ENCODE measurements at regions of chr6 and their contacts with region 1.

Region 1: DNA sequence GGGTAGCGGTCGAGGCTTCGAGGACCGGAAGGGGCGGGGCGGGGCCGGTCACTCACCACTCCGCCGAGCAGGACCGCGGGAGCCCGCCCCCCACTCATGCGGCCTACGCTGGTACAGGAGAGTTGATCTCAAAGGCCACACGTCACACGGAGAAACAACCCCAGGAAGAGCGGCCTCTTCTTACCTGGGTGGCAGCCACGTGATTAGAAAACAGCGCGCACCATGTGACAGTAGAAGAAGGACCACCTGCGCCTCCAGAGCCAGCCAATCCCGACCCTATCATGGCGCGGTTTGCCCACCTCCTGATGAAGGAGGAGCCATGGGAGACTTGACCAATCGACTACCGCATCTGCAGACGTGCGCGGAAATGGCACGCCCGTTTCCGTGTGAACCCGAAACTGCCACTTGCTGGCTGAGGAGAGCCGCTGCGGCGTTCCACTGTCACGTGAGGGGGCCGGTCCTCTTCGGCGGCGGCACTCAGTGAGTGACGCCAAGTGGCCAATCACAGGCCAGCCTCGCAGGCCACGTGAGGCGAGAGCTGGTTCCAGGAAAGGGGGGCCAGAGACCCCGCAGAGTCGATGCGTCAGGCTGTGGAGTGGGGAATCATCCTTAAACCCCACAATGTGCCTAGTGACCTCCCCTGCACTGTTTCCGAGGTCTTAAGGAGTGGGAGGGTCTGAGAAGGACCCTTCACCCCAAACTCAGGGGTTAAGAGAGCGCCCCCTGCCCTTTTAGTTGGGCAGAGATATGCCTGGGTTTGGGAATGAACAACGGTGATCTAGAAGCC is at the start of gene CUTA:
- DNase-seq: peak; percentile 100
- H3K4me3 Mint-ChIP-seq: peak within 1 kb of the TSS; percentile 92
- H3K27ac Mint-ChIP-seq: peak within 1 kb of the TSS; percentile 99
- H3K4me1 Mint-ChIP-seq: peaks cover 65% of the 10 kb centered on the region
- H3K27me3 Mint-ChIP-seq: no peaks in the 10 kb centered on the region
- total RNA-seq, gene CUTA: 163 to 181 TPM

Region 2: DNA sequence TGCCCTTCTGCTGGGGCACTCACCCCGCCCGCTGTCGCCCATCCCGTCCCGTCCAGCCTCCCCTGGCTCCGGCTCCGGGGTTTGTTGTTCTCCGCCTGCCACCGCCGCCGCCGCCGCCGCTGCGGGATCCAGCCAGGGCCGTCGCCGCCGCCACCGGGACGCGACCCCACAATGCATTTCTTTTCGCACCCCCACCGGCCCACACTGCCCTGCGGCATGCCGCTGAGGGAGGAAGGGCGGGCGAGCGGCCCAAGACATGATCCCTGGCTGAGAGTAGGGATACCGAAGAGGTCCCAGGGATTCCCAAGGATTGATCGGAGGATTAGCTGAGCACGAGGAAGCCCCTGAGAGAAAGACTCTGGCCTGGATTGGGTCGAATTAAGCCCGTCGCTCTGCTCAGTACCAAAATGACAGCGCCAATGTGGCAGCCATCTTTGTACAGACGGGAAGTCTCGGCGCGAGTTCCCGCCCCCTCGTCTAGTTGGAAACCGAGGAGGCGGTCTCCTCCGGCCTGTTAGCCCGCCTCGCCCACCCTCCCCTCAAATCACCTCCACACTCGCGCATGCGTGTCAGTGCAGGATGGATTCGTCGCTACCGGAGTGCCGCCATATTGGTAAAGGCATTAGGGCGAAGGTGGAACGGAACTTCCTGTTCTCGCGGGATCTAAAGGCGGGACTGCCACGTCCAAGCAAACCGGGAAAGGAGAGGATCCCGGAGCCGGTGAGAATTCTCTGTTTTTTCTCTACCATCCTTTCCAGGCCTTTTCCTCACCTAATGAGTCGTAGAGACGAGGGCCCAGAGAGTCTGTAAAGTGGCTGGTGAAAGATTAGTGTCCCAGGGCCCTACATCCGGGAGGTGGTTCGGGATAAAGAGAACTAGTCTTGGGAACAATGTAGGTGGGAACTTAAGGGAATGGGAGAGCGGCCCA is 217.6 kb before region 1 on chr6 and contains the starts of genes RXRB and SLC39A7:
- CTCF ChIA-PET with region 1: no interaction called
- intact Hi-C with region 1: loop called (anchors 1 kb)
- DNase-seq: peak; percentile 100
- H3K4me3 Mint-ChIP-seq: peak within 1 kb of the TSS; percentile 98
- H3K27ac Mint-ChIP-seq: peak within 1 kb of the TSS; percentile 97
- H3K4me1 Mint-ChIP-seq: peaks cover 60% of the 10 kb centered on the region
- H3K27me3 Mint-ChIP-seq: no peaks in the 10 kb centered on the region
- total RNA-seq, gene RXRB: 50.4 to 50.6 TPM
- total RNA-seq, gene SLC39A7: 35.9 to 39.5 TPM

Region 3: GRCh38 chr6:33213989-33214335 is 204.1 kb before region 1 on chr6:
- CTCF ChIA-PET with region 1: no interaction called
- intact Hi-C with region 1: no loop called
- DNase-seq: no peak
- H3K4me3 Mint-ChIP-seq: peak overlapping the region; percentile 57
- H3K27ac Mint-ChIP-seq: no peak overlapping the region
- H3K4me1 Mint-ChIP-seq: peaks cover 26% of the 10 kb centered on the region
- H3K27me3 Mint-ChIP-seq: peaks cover 31% of the 10 kb centered on the region

Region 4: GRCh38 chr6:33299237-33299944 is 118.7 kb before region 1 on chr6:
- CTCF ChIA-PET with region 1: no interaction called
- intact Hi-C with region 1: no loop called
- DNase-seq: peak; percentile 96
- H3K4me3 Mint-ChIP-seq: peak overlapping the region; percentile 85
- H3K27ac Mint-ChIP-seq: peak overlapping the region; percentile 98
- H3K4me1 Mint-ChIP-seq: peaks cover 29% of the 10 kb centered on the region
- H3K27me3 Mint-ChIP-seq: no peaks in the 10 kb centered on the region

Region 5: GRCh38 chr6:33317669-33318425 is 100.2 kb before region 1 on chr6 and contains the start of gene ZBTB22:
- CTCF ChIA-PET with region 1: interaction called, 4 read pairs
- intact Hi-C with region 1: loop called (anchors 1 kb)
- DNase-seq: peak; percentile 97
- H3K4me3 Mint-ChIP-seq: peak within 1 kb of the TSS; percentile 94
- H3K27ac Mint-ChIP-seq: peak within 1 kb of the TSS; percentile 95
- H3K4me1 Mint-ChIP-seq: peaks cover 72% of the 10 kb centered on the region
- H3K27me3 Mint-ChIP-seq: no peaks in the 10 kb centered on the region
- total RNA-seq, gene ZBTB22: 8.8 to 9.0 TPM

Region 6: DNA sequence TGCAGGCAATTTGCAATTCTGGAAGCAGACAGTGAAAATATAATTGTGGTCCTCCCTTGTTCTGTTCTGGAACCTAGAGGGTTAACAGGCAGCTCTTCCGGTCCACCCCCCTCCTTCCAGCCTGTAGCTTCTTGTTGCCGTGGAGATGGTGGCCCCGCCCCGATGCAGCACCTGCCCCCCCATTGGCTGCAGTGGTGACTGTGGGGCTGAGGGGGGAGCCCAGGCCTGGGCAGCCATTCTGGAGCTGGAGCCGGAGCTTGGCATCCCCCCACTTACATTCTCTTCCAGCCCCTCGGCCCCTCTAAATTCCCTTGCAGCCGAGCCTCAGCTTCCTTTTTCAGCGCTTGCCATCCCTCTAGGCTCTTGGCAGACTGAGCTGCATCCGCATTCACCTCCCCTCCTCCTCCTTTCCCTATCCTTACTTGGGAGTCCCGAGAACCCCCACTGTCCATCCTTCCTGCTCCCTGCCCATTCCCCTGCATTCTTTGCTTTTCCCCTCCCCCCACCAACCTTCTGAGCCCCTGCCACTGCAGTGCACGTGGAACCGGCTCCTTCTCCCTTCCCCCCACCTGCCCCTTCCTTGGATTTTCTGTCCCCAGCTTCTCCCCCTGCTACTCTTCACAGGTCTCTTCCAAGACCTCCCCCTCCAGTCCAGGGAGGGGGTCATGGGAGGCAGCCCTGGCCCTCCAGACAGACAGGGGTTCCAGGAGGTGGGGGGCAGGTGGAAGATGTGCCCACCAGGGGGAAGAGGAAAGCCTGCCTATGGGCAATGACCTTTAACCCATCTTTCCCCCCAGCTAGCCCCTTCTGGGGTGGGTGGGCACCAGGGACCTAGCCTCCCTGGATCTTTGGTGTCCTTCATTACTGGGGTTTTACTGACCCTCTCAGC is 13.1 kb after region 1 on chr6:
- CTCF ChIA-PET with region 1: interaction called, 6 read pairs
- intact Hi-C with region 1: loop called (anchors 1 kb)
- DNase-seq: peak; percentile 86
- H3K4me3 Mint-ChIP-seq: peak overlapping the region; percentile 67
- H3K27ac Mint-ChIP-seq: peak overlapping the region; percentile 64
- H3K4me1 Mint-ChIP-seq: peaks cover 60% of the 10 kb centered on the region
- H3K27me3 Mint-ChIP-seq: no peaks in the 10 kb centered on the region

Region 7: DNA sequence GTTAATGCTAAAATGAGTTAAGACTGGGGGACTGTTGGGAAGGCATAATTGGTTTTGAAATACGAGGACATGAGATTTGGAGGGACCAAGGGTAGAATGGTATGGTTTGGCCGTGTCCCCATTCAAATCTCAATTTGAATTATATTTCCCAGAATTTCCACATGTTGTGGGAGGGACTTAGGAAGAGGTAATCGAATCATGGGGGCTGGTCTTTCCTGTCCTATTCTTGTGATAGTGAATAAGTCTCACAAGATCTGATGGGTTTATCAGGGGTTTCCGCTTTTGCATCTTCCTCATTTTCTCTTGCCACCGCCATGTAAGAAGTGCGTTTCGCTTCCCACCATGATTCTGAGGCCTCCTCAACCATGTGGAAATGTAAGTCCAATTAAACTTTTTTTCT is 49.0 kb after region 1 on chr6:
- CTCF ChIA-PET with region 1: no interaction called
- intact Hi-C with region 1: no loop called
- DNase-seq: no peak
- H3K4me3 Mint-ChIP-seq: no peak overlapping the region
- H3K27ac Mint-ChIP-seq: no peak overlapping the region
- H3K4me1 Mint-ChIP-seq: no peaks in the 10 kb centered on the region
- H3K27me3 Mint-ChIP-seq: no peaks in the 10 kb centered on the region

Region 8: DNA sequence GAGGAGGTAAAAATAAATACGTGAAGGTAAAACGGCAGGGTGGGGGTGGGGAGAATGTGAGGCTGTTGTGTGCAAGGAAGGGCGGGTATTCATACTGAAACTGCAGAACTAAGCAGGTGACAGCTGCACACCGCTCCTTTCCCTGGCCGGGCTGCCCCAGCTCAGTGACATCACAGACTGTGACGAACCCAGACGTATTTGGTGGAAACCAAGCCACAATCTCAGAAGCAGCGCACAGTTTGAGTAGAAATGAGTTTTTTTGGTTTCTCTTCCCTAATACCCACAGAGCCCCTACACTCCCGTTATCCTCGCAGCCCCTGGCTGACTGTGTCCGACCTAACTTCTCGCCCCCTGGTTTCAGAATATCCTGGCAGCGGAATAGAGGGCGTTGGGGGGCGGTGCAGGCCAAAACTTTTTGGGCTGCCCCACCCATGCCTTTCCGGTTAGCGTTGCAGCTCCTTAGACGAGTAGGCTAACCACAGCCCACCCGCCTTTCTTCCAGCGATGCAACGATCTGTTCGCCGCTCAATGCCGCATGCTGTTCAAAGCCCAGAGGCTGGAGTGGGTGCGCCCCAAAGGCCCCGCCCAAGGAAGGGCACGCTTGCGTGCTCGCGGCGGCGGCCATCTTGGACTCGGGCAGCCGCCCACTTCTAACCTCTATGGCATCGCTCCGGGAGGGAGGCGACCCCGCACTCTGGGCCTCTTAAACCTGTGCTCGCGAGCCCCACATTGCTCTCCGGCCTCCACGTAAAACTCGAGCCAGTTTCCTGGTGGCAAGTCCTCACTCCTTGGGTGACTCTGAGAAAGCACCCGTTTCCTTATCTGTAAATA is 152.9 kb after region 1 on chr6:
- CTCF ChIA-PET with region 1: no interaction called
- intact Hi-C with region 1: loop called (anchors 1 kb)
- DNase-seq: peak; percentile 98
- H3K4me3 Mint-ChIP-seq: peak overlapping the region; percentile 90
- H3K27ac Mint-ChIP-seq: peak overlapping the region; percentile 100
- H3K4me1 Mint-ChIP-seq: peaks cover 53% of the 10 kb centered on the region
- H3K27me3 Mint-ChIP-seq: no peaks in the 10 kb centered on the region

Region 9: DNA sequence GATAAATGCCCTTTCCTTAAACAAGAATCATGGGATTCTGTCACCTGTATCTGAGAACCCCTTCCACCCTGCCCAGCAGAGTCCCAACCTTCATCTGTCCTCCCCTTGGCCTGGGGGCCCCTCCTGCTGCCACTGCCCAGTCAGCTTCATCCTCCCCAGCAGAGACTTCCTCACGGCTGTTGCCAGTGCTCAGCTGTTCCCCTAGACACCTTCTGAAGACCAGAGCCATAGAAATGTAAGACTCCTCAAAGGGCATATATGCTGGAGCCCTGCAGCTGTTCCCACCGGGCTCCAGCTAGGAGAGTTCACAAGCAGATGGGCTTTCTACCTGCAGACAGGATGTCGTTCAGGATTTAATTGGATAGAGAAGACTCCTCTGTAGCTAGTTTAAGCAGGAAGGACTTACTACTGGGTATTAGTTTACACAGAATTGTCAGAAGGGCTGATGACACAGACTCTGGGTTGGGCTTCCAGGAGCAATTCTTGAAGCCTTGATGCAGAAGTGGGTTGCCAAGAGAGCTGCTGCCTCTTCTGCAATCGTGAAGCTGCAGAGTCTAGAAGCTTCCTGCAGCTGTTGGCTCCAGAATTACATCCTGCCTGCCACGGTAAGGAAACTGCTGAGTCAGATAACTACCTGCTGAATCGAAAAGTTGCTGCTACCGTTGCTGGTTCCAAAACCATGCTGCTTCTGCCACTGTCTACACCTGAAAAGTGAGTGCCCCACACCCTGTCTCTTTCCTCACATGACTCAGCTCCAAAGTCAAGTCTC is 442.8 kb after region 1 on chr6:
- CTCF ChIA-PET with region 1: no interaction called
- intact Hi-C with region 1: no loop called
- DNase-seq: peak; percentile 64
- H3K4me3 Mint-ChIP-seq: no peak overlapping the region
- H3K27ac Mint-ChIP-seq: no peak overlapping the region
- H3K4me1 Mint-ChIP-seq: peaks cover 37% of the 10 kb centered on the region
- H3K27me3 Mint-ChIP-seq: no peaks in the 10 kb centered on the region

Region 10: GRCh38 chr6:34236131-34236996 is 818.3 kb after region 1 on chr6 and contains the start of gene HMGA1:
- CTCF ChIA-PET with region 1: no interaction called
- intact Hi-C with region 1: loop called (anchors 5 kb)
- DNase-seq: peak; percentile 89
- H3K4me3 Mint-ChIP-seq: peak within 1 kb of the TSS; percentile 91
- H3K27ac Mint-ChIP-seq: peak within 1 kb of the TSS; percentile 93
- H3K4me1 Mint-ChIP-seq: peaks cover 42% of the 10 kb centered on the region
- H3K27me3 Mint-ChIP-seq: no peaks in the 10 kb centered on the region
- total RNA-seq, gene HMGA1: 705 to 712 TPM